ENCODE measurements at regions of chr10 and their contacts with region 1.

Region 1: GRCh38 chr10:99248824-99249223 is 13.2 kb upstream of the HPSE2 start:
- DNase-seq: no peak
- H3K4me3 ChIP-seq: no peak overlapping the region
- H3K27ac ChIP-seq: no peak overlapping the region
- H3K4me1 ChIP-seq: no peaks in the 10 kb centered on the region
- H3K27me3 ChIP-seq: peaks cover 19% of the 10 kb centered on the region
- CTCF ChIP-seq: no peak

Region 2: GRCh38 chr10:98467506-98468346 is 781.1 kb before region 1 on chr10:
- intact Hi-C with region 1: loop called (anchors 5 kb)
- DNase-seq: peak; percentile 60
- H3K4me3 ChIP-seq: peak overlapping the region; percentile 66
- H3K27ac ChIP-seq: no peak overlapping the region
- H3K4me1 ChIP-seq: peaks cover 40% of the 10 kb centered on the region
- H3K27me3 ChIP-seq: peaks cover 14% of the 10 kb centered on the region
- CTCF ChIP-seq: peak; percentile 86

Measured in left ventricle myocardium inferior (tissue), 1 donor.